ENCODE measurements at regions of chr15 and their contacts with region 1.

Region 1: GRCh38 chr15:71743861-71744382 is 66.4 kb upstream of the NR2E3 start:
- DNase-seq: peak; percentile 61 to 76 (median 69)
- ATAC-seq: peak in 1 of 2 donors; percentile 38
- H3K4me3 ChIP-seq: no peak overlapping the region
- H3K27ac ChIP-seq: no peak overlapping the region
- H3K4me1 ChIP-seq: no peaks in the 10 kb centered on the region
- H3K27me3 ChIP-seq: no peaks in the 10 kb centered on the region

Region 2: GRCh38 chr15:71800835-71801745 is 57.2 kb after region 1 on chr15:
- intact Hi-C with region 1: loop called in 2 of 4 experiments (anchors 5 to 10 kb)
- DNase-seq: no peak
- ATAC-seq: peak; percentile 85
- H3K4me3 ChIP-seq: no peak overlapping the region
- H3K27ac ChIP-seq: no peak overlapping the region
- H3K4me1 ChIP-seq: no peaks in the 10 kb centered on the region
- H3K27me3 ChIP-seq: no peaks in the 10 kb centered on the region

Region 3: GRCh38 chr15:72155635-72156616 is 412.0 kb after region 1 on chr15:
- intact Hi-C with region 1: loop called in 1 of 4 experiments (anchors 10 kb)
- DNase-seq: peak; percentile 81 to 93 (median 92)
- ATAC-seq: peak; percentile 92 to 94
- H3K4me3 ChIP-seq: peak overlapping the region; percentile 50
- H3K27ac ChIP-seq: no peak overlapping the region
- H3K4me1 ChIP-seq: no peaks in the 10 kb centered on the region
- H3K27me3 ChIP-seq: no peaks in the 10 kb centered on the region

Measured in right cardiac atrium (tissue), 5 donors.